ENCODE measurements at regions of chr2 and their contacts with region 1.

Region 1: GRCh38 chr2:35410431-35411061 is 945.0 kb upstream of the CRIM1 start:
- DNase-seq: peak; percentile 45
- H3K4me3 ChIP-seq: no peak overlapping the region; a peak in 1 of 4 replicates
- H3K27ac ChIP-seq: no peak overlapping the region
- H3K4me1 ChIP-seq: no peaks in the 10 kb centered on the region
- H3K27me3 ChIP-seq: no peaks in the 10 kb centered on the region
- CTCF ChIP-seq: peak; percentile 100
- EP300 ChIP-seq: no peak
- RAD21 ChIP-seq: peak; percentile 74

Region 2: DNA sequence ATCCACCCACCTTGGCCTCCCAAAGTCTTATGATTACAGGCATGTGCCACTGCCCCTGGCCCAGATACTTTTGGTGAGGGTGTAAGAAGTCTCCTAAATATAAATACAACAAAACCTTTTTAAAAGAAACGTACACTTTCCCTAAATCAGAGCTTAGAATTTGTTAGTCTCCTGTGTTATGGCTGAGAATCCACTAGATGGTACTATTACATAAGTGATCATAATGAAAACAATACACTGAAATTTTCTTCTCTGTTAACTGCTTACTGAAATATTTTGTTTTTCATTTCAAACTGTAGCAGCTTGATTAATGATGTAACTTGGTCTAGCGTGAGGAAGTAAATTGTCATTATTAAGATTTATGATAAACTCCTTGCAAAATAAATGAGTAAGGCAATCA is 1736.6 kb before region 1 on chr2:
- CTCF ChIA-PET with region 1: interaction called, 29 read pairs
- POLR2A ChIA-PET with region 1: no interaction called
- DNase-seq: peak; percentile 24
- H3K4me3 ChIP-seq: peak overlapping the region in 1 of 2 experiments; percentile 11; a peak in 1 of 4 replicates
- H3K27ac ChIP-seq: no peak overlapping the region
- H3K4me1 ChIP-seq: peaks cover 0 to 8% of the 10 kb centered on the region in 2 experiments; a peak in 2 of 4 replicates
- H3K27me3 ChIP-seq: no peaks in the 10 kb centered on the region
- CTCF ChIP-seq: peak; percentile 67
- EP300 ChIP-seq: no peak
- RAD21 ChIP-seq: peak; percentile 76

Region 3: DNA sequence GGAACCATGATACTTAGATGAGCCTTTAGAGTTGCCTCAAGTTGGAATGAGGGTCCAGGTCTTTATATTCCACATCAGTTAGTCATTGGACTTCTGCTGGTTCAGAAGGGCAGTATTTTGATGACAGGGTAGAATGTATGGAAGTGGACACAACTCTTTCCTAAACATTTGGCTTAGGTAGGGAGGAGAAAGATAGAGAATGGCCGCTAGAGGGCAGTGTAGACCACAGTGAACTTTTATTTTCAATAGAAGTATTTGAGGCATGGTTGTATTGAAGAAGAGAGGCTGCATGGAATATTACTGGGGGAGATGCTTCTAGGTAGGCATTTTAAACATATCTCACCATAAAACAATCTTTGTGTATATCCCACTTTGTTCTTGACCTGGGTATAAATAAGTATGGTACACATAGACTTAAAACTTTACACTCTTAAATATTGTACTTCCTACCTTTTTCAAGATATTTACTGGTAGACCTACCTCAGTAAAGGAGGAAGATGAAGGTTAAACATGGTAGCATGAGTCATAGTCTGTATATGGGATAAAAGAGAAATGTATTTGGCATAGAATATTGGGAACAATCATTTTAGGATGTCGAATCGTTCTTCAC is 1313.9 kb before region 1 on chr2:
- CTCF ChIA-PET with region 1: interaction called, 14 read pairs
- POLR2A ChIA-PET with region 1: no interaction called
- DNase-seq: peak; percentile 36
- H3K4me3 ChIP-seq: no peak overlapping the region
- H3K27ac ChIP-seq: no peak overlapping the region
- H3K4me1 ChIP-seq: no peaks in the 10 kb centered on the region
- H3K27me3 ChIP-seq: no peaks in the 10 kb centered on the region
- CTCF ChIP-seq: peak; percentile 96
- EP300 ChIP-seq: no peak
- RAD21 ChIP-seq: peak; percentile 86

Region 4: DNA sequence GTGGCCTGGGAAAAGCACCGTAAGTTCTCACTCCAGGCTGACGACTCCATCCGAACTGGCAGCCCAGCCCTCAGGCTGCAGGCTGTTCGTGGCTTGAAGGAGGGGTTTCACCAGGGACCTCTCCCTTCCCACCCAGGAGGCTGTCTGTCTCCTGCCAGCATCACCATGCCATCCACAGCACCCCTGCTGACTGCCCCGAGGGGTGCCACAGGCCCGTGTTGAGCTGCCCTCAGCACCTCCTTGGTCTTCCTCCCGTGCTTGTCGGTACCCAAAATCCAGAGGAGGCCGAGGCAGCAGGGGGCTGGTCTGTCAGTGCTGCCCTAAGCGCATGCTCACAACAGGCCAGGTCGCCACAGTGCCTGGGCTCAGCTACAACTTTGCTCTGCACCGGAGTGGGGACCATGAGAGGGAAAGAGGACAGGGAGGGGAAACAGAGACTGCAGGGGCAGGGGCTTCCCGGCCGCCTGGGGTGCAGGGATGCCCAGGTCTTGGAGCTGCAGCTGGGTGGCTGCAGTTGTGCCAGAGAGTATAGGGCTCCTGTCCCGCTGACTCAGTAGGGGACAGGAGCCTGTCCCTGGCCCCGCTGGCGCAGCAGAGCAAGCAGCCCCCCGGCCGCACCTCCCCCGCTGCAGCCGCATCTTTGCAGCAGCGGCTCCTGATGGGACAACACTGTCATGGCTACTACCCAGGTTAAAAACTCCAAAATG is 18.7 kb before region 1 on chr2:
- CTCF ChIA-PET with region 1: interaction called, 16 read pairs
- POLR2A ChIA-PET with region 1: no interaction called
- DNase-seq: peak; percentile 9
- H3K4me3 ChIP-seq: no peak overlapping the region
- H3K27ac ChIP-seq: no peak overlapping the region
- H3K4me1 ChIP-seq: no peaks in the 10 kb centered on the region
- H3K27me3 ChIP-seq: no peaks in the 10 kb centered on the region
- CTCF ChIP-seq: no peak
- EP300 ChIP-seq: no peak
- RAD21 ChIP-seq: no peak

Region 5: DNA sequence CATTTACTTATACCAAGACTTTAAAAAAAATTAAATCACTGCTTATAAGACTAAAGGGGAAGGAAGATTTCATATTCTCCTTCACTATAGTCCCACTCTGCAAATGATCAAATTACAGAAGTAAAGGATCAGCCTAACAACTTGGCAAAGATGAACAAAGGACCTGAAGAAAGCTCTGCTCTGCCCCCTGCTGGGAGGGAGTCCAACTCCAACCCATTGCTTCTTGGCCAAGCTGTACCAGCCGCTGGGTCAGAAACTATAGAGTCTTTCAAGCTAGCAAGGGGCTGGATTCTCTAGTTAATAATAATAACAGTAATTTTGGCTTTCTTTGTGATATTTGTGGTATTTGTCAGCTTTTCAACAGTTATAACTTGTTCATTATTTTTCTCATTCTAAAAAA is 18.0 kb after region 1 on chr2:
- CTCF ChIA-PET with region 1: interaction called, 41 read pairs
- POLR2A ChIA-PET with region 1: no interaction called
- DNase-seq: peak; percentile 19
- H3K4me3 ChIP-seq: peak overlapping the region in 1 of 2 experiments; percentile 18; a peak in 1 of 4 replicates
- H3K27ac ChIP-seq: no peak overlapping the region
- H3K4me1 ChIP-seq: no peaks in the 10 kb centered on the region
- H3K27me3 ChIP-seq: no peaks in the 10 kb centered on the region
- CTCF ChIP-seq: peak; percentile 77
- EP300 ChIP-seq: no peak
- RAD21 ChIP-seq: peak; percentile 44